GM10248 (cell line): ENCODE measurements at regions of chr11 and their contacts with region 1.

Region 1: GRCh38 chr11:116787786-116788486 is at the start of gene ZPR1:
- DNase-seq: peak; percentile 94
- CTCF ChIP-seq: no peak

Region 2: DNA sequence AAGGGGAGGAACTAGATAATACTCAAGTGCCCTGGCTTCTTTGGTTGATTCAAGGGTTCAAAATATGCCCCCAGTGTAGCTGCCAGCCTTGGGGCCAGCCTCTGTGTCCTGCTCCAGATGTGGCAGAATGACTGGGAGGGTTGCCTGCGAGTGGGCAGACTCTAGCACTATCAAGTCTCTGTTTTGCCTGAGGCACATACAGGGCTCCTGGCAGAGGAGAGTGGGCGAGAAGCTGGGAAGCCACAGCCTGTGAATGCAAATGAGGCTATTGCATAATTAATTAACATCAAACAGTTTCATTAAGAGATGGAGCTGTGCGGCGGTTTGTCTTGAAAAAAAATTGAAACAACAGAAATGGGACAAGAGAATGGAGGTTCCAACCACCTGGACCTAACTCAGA is 65.9 kb before region 1 on chr11:
- CTCF ChIA-PET with region 1: no interaction called
- POLR2A ChIA-PET with region 1: no interaction called
- DNase-seq: no peak
- CTCF ChIP-seq: no peak

Region 3: GRCh38 chr11:116732271-116733042 is 55.5 kb before region 1 on chr11:
- CTCF ChIA-PET with region 1: interaction called, 11 read pairs
- POLR2A ChIA-PET with region 1: no interaction called
- DNase-seq: peak; percentile 90
- CTCF ChIP-seq: peak; percentile 84

Region 4: DNA sequence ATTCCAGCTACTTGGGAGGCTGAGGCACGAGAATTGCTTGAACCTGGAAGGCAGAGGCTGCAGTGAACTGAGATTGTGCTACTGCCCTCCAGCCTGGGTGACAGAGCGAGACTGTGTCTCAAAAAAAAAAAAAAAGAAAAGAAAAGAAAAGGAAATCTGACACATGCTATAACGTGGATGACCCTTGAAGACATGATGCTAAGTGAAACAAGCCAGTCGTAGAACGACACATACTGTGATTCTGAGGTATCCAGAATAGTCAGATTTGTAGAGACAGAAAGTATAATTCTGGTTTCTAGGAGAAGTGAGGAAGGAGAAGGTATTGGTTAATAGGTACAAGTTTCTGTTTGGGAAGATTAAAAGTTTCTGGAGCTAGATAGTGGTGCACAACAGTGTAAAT is 10.4 kb after region 1 on chr11:
- CTCF ChIA-PET with region 1: interaction called, 20 read pairs
- POLR2A ChIA-PET with region 1: no interaction called
- DNase-seq: no peak
- CTCF ChIP-seq: no peak

Region 5: GRCh38 chr11:116821050-116821918 is 33.3 kb after region 1 on chr11:
- CTCF ChIA-PET with region 1: interaction called, 16 read pairs
- POLR2A ChIA-PET with region 1: no interaction called
- DNase-seq: no peak
- CTCF ChIP-seq: no peak

Region 6: DNA sequence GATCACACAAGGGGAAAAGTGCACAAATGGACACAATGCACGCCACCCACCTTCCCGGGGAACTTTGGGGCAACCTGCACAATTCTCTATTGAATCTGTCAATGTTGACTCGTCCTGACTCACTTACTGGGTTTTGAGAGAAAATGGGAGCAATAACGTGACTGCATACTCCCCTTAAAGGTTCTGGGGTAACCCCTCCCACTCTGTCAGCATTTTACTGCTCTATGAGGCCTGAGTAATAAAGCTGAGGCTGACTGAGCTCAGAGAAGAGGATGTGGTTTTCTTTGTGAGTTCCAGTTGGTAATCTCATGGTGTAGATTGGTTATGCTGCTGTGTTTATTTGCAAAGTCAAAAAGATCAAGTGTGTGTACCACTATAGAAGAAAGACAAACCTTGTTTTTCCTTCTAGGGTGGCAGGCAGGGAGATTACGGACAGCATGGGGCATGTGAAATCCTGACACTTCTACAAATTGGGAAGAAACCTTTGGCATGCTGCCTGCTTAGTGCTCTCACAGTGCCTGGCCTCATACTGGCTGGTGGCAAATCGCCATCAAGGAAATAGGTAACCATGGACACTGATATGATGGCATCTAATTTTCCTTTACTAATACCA is 65.6 kb after region 1 on chr11:
- CTCF ChIA-PET with region 1: interaction called, 27 read pairs
- POLR2A ChIA-PET with region 1: no interaction called
- DNase-seq: peak; percentile 88
- CTCF ChIP-seq: no peak

Region 7: DNA sequence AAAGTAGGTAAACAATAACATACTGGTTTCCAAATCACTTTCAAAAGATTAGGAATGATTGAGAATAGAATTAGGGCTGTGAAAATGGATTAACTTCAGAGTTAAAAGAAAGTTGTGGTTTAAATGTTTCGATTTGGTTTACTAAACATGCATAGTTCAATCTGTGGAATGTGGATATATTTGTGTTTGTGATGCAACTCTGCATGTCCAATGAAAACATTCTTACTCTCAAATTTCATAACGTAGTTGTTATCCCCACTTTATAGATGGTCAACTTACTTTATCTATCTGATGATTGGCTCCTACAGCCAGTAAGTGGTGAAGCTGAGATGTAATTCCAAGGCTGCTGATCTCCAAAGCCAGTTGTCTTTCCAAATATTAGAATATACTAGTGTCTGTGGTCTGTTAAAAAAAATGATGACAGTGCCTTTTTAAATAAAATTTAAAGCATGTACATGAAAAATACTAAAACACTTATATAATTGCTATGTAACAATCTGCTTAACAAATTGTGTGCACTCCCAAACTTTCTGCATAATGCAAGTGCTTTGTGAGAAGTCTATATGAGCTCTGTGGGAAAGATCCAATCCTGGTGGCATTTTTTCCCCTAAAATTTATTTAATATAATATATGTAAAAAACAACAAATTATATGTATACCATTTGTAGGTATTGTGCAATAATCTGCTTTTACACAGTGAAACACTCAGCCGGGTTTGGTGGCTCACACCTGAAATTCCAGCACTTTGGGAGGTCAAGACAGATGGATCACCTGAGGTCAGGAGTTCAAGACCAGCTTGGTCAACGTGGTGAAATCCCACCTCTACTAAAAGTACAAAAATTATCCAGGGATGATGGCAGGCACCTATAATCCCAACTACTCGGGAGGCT is 320.0 kb after region 1 on chr11:
- CTCF ChIA-PET with region 1: interaction called, 86 read pairs
- POLR2A ChIA-PET with region 1: no interaction called
- DNase-seq: no peak
- CTCF ChIP-seq: no peak

Region 8: DNA sequence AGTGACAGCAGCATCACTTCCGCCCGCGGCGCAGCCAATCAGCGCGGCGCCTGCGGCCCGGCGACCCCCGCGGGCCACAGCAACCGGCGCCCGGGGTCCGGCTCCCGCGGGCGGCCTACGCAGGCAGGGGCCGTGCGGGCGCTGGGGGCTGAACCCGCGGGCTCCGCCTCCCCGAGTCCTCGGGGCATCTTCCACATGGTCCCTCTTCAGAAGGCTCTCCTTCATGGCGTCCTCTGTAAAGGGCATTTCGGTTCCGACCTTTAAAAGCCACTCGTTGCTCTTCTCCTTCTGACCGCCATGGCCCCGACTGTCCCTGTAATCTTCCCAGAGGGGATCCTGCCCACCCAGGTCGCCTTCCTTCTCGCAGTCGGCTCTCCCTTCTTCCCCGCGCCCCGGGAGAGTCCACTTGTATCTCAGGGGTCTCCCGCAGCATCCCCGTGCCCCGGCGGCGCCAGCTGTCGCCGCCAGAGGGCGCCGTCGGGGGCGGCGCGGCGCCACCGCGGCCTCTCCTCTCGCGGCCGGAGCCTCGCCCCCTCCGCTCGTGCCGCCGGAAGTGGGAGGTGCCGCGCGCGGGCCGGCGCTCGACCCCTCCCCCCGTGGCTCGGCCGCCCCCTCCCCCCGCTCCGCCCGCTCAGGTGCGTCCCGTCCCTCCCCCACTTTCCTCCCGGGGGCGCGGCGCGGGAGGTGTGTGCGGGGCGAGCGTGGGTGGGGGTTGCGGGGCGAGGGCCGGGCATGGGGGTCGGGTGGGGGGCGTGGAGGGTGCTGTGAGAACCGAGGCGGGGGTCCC is 444.3 kb after region 1 on chr11 and contains the start of gene RNF214:
- CTCF ChIA-PET with region 1: interaction called, 16 read pairs
- POLR2A ChIA-PET with region 1: no interaction called
- DNase-seq: peak; percentile 98
- CTCF ChIP-seq: peak; percentile 85